ENCODE measurements at regions of chr15 and their contacts with region 1.

Region 1: DNA sequence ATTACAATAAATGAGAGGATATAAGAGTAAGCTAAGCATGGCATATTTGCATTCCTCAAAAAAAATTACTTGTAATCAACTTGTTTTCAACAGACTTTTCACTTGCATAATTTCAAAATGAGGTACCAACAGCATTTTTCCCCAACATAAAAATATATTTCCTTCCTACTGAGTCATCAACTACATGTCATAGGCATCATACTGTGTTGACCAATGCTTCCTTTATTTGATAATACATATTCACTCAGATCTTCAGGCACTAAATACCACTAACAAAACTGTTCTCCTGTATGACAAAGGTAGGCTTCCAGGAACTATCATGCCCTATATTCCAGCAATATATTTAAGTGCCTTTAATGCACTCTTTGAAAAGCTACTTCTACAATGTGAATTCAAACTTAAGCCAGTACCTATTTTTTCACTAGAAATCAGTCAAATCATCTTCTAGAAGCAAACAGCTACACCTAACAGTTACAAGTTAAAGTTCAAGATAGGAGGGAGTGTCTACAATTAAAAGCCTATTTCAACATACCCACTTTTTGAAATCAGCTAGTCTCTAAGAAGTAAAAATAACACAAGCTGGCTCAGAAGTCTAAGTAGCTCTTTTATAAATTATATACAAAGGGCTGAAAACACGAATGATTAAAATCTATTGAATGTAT is 11.3 kb downstream of the ADAM10 start:
- DNase-seq: peak in 3 of 14 experiments; percentile 6 to 36 (median 25)
- ATAC-seq: no peak
- H3K4me3 ChIP-seq: no peak overlapping the region
- H3K4me3 Mint-ChIP-seq: no peak overlapping the region
- H3K27ac ChIP-seq: no peak overlapping the region
- H3K27ac Mint-ChIP-seq: no peak overlapping the region
- H3K4me1 ChIP-seq: peaks cover 11% of the 10 kb centered on the region
- H3K4me1 Mint-ChIP-seq: peaks cover 86% of the 10 kb centered on the region
- H3K27me3 ChIP-seq: no peaks in the 10 kb centered on the region
- H3K27me3 Mint-ChIP-seq: no peaks in the 10 kb centered on the region
- CTCF ChIP-seq: no peak

Region 2: GRCh38 chr15:58715266-58715917 is 22.8 kb before region 1 on chr15:
- CTCF ChIA-PET with region 1: no interaction called
- POLR2A ChIA-PET with region 1: no interaction called
- intact Hi-C with region 1: loop called in 1 of 2 experiments (anchors 2 kb)
- DNase-seq: no peak
- ATAC-seq: no peak
- H3K4me3 ChIP-seq: no peak overlapping the region
- H3K4me3 Mint-ChIP-seq: no peak overlapping the region
- H3K27ac ChIP-seq: no peak overlapping the region
- H3K27ac Mint-ChIP-seq: no peak overlapping the region
- H3K4me1 ChIP-seq: no peaks in the 10 kb centered on the region
- H3K4me1 Mint-ChIP-seq: peaks cover 39% of the 10 kb centered on the region
- H3K27me3 ChIP-seq: no peaks in the 10 kb centered on the region
- H3K27me3 Mint-ChIP-seq: no peaks in the 10 kb centered on the region
- CTCF ChIP-seq: no peak

Region 3: DNA sequence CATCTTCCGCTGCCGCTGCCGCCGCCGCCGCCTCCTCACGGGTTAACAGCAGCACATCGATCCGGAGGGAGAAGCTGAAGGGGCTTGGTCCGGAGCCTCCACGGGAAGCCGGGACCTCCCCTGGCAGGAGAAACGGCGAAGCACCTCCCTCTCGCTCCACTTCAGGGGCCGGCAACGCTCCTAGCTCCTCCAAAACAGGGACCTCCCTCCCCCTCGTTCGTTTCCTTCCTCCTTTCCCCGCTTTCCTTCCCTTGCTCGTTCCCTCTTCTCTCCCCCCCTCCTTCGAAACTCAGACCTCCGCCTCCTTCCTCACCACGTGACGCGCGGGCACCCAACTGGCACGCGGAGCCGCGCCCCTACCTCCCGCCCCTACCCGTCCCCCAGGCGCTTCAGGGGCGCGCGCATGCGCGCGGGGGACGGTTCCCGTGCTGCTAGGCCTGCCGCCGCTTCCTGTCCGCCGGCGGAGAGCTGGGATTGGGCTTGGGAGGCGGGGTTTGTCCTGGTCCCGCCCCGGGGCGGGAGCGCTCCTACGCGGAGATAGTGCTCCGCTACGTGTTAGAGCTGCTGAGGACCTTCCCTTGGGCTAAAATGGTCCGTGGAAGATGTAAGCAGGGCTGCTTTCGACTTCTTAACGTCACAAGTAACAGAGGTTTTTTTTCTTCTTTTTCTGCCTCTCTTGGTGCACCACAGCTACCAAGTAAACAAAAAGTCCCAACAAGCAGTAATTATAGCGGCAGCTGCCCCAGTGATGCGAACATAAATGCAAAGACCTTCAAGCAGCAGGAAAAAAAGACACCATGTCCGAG is 11.6 kb after region 1 on chr15 and contains the start of gene ADAM10:
- CTCF ChIA-PET with region 1: no interaction called
- POLR2A ChIA-PET with region 1: interaction called, 11 read pairs
- intact Hi-C with region 1: no loop called
- DNase-seq: peak; percentile 92 to 99 (median 98)
- ATAC-seq: peak; percentile 89
- H3K4me3 ChIP-seq: peak within 1 kb of the TSS; percentile 97
- H3K4me3 Mint-ChIP-seq: peak within 1 kb of the TSS; percentile 97
- H3K27ac ChIP-seq: peak within 1 kb of the TSS; percentile 73 to 81
- H3K27ac Mint-ChIP-seq: peak within 1 kb of the TSS; percentile 90
- H3K4me1 ChIP-seq: peaks cover 19% of the 10 kb centered on the region
- H3K4me1 Mint-ChIP-seq: peaks cover 46% of the 10 kb centered on the region
- H3K27me3 ChIP-seq: no peaks in the 10 kb centered on the region
- H3K27me3 Mint-ChIP-seq: no peaks in the 10 kb centered on the region
- CTCF ChIP-seq: no peak
- total RNA-seq, gene ADAM10: 70.5 to 80.4 TPM

Region 4: DNA sequence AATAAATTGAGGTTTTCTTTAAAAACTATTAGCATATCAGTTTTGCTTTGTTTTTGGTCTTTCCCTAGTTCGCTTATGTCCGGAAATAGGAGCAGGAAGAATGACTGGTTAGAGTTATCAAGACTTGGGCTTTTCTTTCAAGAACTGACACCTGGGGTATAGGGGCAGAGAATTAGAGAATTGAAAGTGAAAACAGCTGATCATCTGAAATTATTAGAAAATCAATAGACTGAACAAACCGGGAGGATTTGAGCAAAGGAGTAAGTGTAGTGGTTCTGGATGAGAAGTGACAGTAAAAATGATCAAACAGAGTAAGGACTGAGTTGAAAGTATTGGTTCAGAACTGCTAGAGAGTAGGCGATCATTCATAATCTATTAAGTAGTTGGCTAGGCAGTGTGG is 38.9 kb after region 1 on chr15:
- CTCF ChIA-PET with region 1: no interaction called
- POLR2A ChIA-PET with region 1: no interaction called
- intact Hi-C with region 1: loop called in 1 of 2 experiments (anchors 5 kb)
- DNase-seq: no peak
- ATAC-seq: no peak
- H3K4me3 ChIP-seq: no peak overlapping the region
- H3K4me3 Mint-ChIP-seq: no peak overlapping the region
- H3K27ac ChIP-seq: no peak overlapping the region
- H3K27ac Mint-ChIP-seq: no peak overlapping the region
- H3K4me1 ChIP-seq: peaks cover 25% of the 10 kb centered on the region
- H3K4me1 Mint-ChIP-seq: peaks cover 10% of the 10 kb centered on the region
- H3K27me3 ChIP-seq: no peaks in the 10 kb centered on the region
- H3K27me3 Mint-ChIP-seq: no peaks in the 10 kb centered on the region
- CTCF ChIP-seq: no peak

Region 5: GRCh38 chr15:59020322-59020721 is 282.1 kb after region 1 on chr15:
- CTCF ChIA-PET with region 1: no interaction called
- POLR2A ChIA-PET with region 1: no interaction called
- intact Hi-C with region 1: no loop called
- DNase-seq: no peak
- ATAC-seq: no peak
- H3K4me3 ChIP-seq: no peak overlapping the region
- H3K4me3 Mint-ChIP-seq: no peak overlapping the region
- H3K27ac ChIP-seq: no peak overlapping the region
- H3K27ac Mint-ChIP-seq: no peak overlapping the region
- H3K4me1 ChIP-seq: no peaks in the 10 kb centered on the region
- H3K4me1 Mint-ChIP-seq: peaks cover 39% of the 10 kb centered on the region
- H3K27me3 ChIP-seq: no peaks in the 10 kb centered on the region
- H3K27me3 Mint-ChIP-seq: no peaks in the 10 kb centered on the region
- CTCF ChIP-seq: no peak